ENCODE measurements at regions of chr5 and their contacts with region 1.

Region 1: GRCh38 chr5:36870399-36871040 is 6.0 kb upstream of the NIPBL start:
- DNase-seq: peak; percentile 80
- ATAC-seq: peak; percentile 83
- H3K4me3 ChIP-seq: no peak overlapping the region
- H3K4me3 Mint-ChIP-seq: no peak overlapping the region
- H3K27ac ChIP-seq: no peak overlapping the region
- H3K27ac Mint-ChIP-seq: no peak overlapping the region
- H3K4me1 ChIP-seq: peaks cover 14 to 22% of the 10 kb centered on the region in 2 donors
- H3K4me1 Mint-ChIP-seq: peaks cover 24% of the 10 kb centered on the region
- H3K27me3 ChIP-seq: no peaks in the 10 kb centered on the region
- H3K27me3 Mint-ChIP-seq: no peaks in the 10 kb centered on the region
- CTCF ChIP-seq: peak; percentile 83

Region 2: DNA sequence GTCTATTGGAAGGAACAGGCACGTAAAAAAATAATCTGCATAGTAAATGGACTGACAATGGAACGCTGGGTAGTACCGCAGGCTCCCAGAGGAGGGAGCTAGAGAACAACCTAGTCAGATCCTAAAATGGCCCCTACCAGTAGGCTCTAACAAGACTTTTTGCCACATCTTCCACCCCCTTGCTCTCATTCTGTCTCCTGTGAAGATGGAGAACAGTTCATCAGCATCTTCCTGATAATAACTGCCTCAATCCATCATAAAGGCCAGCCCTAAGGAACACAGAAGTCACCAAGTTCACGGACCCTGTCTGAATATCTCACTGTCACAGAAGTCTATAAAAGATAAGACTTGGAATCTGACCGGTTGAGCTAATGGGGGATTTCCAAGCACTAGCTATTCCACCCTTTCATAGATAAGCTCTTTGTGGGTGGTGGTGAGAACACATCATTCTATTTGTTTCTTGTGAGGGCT is 130.7 kb before region 1 on chr5:
- CTCF ChIA-PET with region 1: interaction called, 36 read pairs
- POLR2A ChIA-PET with region 1: interaction called, 10 read pairs
- intact Hi-C with region 1: loop called (anchors 1 kb)
- DNase-seq: peak; percentile 77
- ATAC-seq: peak; percentile 78
- H3K4me3 ChIP-seq: no peak overlapping the region
- H3K4me3 Mint-ChIP-seq: no peak overlapping the region
- H3K27ac ChIP-seq: no peak overlapping the region
- H3K27ac Mint-ChIP-seq: no peak overlapping the region
- H3K4me1 ChIP-seq: peaks cover 11% of the 10 kb centered on the region in 2 donors
- H3K4me1 Mint-ChIP-seq: peaks cover 13% of the 10 kb centered on the region
- H3K27me3 ChIP-seq: peaks cover 0 to 17% (median 5%) of the 10 kb centered on the region in 4 experiments
- H3K27me3 Mint-ChIP-seq: peaks cover 27% of the 10 kb centered on the region
- CTCF ChIP-seq: peak; percentile 82

Region 3: DNA sequence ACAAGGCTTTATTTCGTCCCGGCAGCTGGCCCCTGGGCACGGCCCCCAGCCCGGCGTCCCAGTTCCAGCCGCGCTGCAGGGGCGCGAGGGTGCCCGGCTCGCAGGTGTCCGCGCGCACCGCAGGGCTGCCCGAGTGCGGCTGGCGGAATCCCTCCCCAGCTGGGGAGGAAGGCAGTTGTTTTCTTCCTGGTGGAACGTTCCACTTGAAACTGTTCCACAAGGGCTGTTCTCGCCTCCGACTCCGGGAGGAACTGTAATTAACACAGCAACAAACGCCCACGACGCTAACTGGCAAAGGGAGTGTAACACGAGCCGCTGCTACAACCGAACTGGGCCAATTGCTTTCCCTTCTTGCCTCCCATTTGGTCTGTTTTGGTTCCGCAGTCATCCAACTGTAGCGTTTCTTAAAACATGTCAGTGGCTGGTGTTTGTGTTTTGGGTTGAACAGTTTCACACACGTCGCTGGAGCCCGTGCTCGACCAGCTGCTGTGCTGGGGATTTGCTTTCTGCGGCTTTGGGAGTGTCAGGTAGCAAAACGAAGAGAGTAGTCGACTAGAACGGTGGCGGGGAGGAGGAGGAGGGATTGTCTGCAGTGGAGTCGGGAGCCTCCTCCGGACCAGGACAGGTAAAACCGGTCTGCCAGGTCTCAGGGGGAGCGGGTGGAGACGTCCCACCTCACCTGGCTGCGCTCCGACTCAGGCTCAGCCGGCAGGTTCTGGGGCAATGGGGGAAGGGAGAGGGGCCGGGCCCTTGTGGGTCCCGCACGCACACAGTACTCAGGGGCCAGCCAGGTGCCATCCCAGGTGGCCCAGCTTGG is 125.5 kb before region 1 on chr5:
- CTCF ChIA-PET with region 1: interaction called, 36 read pairs
- POLR2A ChIA-PET with region 1: interaction called, 10 read pairs
- intact Hi-C with region 1: loop called (anchors 1 kb)
- DNase-seq: peak; percentile 70
- ATAC-seq: peak; percentile 70
- H3K4me3 ChIP-seq: peak overlapping the region; percentile 47 to 88 (median 63)
- H3K4me3 Mint-ChIP-seq: peak overlapping the region; percentile 95
- H3K27ac ChIP-seq: peak overlapping the region in 1 of 2 donors; percentile 44
- H3K27ac Mint-ChIP-seq: peak overlapping the region; percentile 94
- H3K4me1 ChIP-seq: peaks cover 20% of the 10 kb centered on the region in 2 donors
- H3K4me1 Mint-ChIP-seq: peaks cover 20% of the 10 kb centered on the region
- H3K27me3 ChIP-seq: peaks cover 0 to 13% (median 3%) of the 10 kb centered on the region in 4 experiments
- H3K27me3 Mint-ChIP-seq: peaks cover 12% of the 10 kb centered on the region
- CTCF ChIP-seq: peak; percentile 36

Region 4: DNA sequence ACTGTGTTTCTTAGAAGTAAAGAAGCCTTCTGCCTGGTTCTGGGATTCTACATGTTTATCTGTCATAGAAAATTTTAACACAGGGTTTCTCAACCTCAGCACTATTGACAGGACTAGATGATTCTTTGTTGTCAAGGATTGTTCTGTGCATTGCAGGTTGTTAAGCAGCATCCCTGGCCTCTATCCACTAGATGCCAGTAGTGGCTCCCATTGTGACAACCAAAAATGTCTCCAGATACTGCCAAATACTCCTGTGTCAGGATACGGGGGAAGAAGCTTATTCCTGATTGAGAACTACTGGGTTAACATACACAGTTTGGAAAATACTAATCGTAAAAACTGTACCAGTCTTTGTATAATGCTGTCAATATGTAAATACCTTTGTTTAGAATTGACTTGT is 173.2 kb after region 1 on chr5:
- CTCF ChIA-PET with region 1: no interaction called
- POLR2A ChIA-PET with region 1: no interaction called
- intact Hi-C with region 1: no loop called
- DNase-seq: no peak
- ATAC-seq: no peak
- H3K4me3 ChIP-seq: no peak overlapping the region
- H3K4me3 Mint-ChIP-seq: no peak overlapping the region
- H3K27ac ChIP-seq: no peak overlapping the region
- H3K27ac Mint-ChIP-seq: no peak overlapping the region
- H3K4me1 ChIP-seq: no peaks in the 10 kb centered on the region
- H3K4me1 Mint-ChIP-seq: no peaks in the 10 kb centered on the region
- H3K27me3 ChIP-seq: no peaks in the 10 kb centered on the region
- H3K27me3 Mint-ChIP-seq: no peaks in the 10 kb centered on the region
- CTCF ChIP-seq: no peak

Measured in B cell (primary cell).